Testis (tissue), 5 donors: ENCODE measurements at regions of chr1 and their contacts with region 1.

Region 1: DNA sequence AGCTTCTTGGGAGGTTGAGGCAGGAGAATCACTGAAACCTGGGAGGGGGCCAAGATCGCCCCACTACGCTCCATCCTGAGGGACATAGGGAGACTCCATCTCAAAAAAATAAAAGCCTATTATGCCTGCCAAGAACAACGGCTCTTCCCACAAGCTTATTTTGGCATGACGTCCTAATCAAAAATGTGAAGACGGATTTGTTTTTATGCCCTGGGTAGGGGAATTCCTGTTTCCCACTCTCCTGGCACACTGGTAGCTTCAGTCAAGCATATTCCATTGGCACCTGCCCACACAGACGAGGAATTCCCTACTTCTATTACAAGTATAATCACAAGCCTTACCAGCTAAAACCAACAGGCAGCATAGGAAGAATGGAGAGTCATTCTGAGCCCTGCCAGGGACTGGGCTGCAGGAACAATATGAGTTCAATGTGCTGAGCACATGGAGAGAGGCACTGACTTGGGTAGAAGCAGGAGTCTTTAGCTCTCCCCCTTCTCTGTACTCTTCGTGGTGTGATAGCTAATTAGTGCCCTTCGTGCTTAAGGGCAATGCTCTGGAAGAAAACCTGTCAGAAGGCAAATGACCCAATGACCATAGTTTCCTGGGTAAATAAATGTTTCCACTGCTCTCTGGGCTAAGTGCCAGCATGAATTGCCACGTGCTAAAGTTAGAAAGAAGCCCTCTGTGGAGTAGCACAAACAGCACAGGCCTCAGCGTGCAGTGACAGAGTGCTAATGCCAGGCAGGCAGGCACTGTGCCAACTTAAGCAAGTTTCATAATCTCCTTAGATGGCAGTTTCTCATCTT is 16.8 kb downstream of the TNFSF4 start:
- DNase-seq: peak; percentile 93
- H3K4me3 ChIP-seq: no peak overlapping the region
- H3K27ac ChIP-seq: peak overlapping the region; percentile 40 to 50
- H3K4me1 ChIP-seq: peaks cover 16% of the 10 kb centered on the region
- H3K27me3 ChIP-seq: no peaks in the 10 kb centered on the region
- CTCF ChIP-seq: no peak
- POLR2A ChIP-seq: no peak

Region 2: GRCh38 chr1:172826096-172826743 is 364.1 kb before region 1 on chr1:
- intact Hi-C with region 1: loop called (anchors 10 kb)
- DNase-seq: peak; percentile 37
- H3K4me3 ChIP-seq: no peak overlapping the region
- H3K27ac ChIP-seq: peak overlapping the region; percentile 9 to 41
- H3K4me1 ChIP-seq: no peaks in the 10 kb centered on the region
- H3K27me3 ChIP-seq: no peaks in the 10 kb centered on the region
- CTCF ChIP-seq: peak; percentile 37 to 62 (median 50)
- POLR2A ChIP-seq: no peak